Activated B cell treated with CpG ODN at 0.5 μM for 24 hours (primary cell): ENCODE measurements at regions of chr9 and their contacts with region 1.

Region 1: DNA sequence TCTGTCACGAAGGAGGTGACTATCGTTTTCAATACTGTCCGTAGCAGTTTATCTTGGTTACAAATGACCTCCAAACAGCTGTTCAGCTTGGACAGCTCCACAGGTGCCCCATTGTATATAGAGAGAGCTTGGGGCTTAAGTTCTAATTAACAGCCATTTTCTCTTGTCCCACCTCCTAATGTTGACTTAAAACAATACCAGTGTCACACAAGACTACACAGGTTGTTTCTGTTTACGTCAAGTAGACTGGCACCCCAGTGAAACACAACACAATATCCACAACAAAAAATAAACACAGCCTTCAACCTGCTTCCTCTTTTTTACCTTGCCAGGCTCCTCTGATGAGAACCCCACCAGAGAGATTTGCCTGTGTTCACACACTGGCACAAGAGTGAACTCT is 39.8 kb upstream of the TLE1 start:
- DNase-seq: no peak
- ATAC-seq: peak; percentile 72
- H3K4me3 Mint-ChIP-seq: peak overlapping the region; percentile 76
- H3K27ac Mint-ChIP-seq: peak overlapping the region; percentile 76
- H3K4me1 Mint-ChIP-seq: peaks cover 23% of the 10 kb centered on the region
- H3K27me3 Mint-ChIP-seq: no peaks in the 10 kb centered on the region
- CTCF ChIP-seq: no peak

Region 2: DNA sequence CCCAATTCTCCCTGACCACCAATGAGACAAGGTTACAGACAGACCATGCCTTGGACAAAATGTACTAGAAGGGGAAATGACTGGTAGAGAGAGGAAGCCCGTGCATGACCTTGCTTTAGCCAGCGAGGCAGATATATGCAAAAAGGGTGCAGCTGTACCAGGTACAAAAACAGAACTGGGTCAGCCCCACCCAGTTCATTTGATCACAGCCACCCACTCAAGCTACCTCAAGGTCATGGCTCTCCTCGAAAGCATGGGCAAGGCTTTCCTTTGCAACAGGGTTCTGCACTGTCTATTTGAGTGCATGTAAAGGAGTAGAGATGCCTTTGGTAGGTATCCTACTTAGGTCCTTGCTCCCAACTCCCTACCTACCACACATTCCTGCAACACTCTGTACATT is 73.1 kb before region 1 on chr9:
- CTCF ChIA-PET with region 1: no interaction called
- POLR2A ChIA-PET with region 1: interaction called, 11 read pairs
- intact Hi-C with region 1: loop called (anchors 1 kb)
- DNase-seq: peak; percentile 42
- ATAC-seq: peak; percentile 89
- H3K4me3 Mint-ChIP-seq: peak overlapping the region; percentile 78
- H3K27ac Mint-ChIP-seq: peak overlapping the region; percentile 97
- H3K4me1 Mint-ChIP-seq: peaks cover 84% of the 10 kb centered on the region
- H3K27me3 Mint-ChIP-seq: no peaks in the 10 kb centered on the region
- CTCF ChIP-seq: no peak

Region 3: DNA sequence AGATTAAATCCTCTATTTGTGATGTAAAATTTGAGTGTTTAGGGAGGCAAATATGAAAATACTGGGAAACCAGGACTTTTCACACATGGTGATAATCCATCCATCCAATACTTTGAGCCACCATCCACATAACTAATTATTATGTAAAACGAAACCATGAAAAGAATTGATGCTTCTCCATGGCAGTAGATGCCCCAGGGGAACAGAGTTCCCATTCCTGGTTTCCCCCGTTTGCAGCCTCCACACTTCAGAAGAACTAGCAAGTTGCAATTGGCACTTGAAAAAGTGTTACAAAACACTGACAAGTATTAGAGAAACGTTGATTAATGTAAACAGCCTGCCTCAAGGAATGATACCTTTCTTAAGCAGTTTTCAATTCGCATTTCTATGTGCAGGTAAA is 30.0 kb before region 1 on chr9:
- CTCF ChIA-PET with region 1: no interaction called
- POLR2A ChIA-PET with region 1: no interaction called
- intact Hi-C with region 1: no loop called
- DNase-seq: no peak
- ATAC-seq: no peak
- H3K4me3 Mint-ChIP-seq: no peak overlapping the region
- H3K27ac Mint-ChIP-seq: no peak overlapping the region
- H3K4me1 Mint-ChIP-seq: peaks cover 9% of the 10 kb centered on the region
- H3K27me3 Mint-ChIP-seq: no peaks in the 10 kb centered on the region
- CTCF ChIP-seq: no peak

Region 4: GRCh38 chr9:81826517-81826906 is 97.4 kb after region 1 on chr9:
- CTCF ChIA-PET with region 1: no interaction called
- POLR2A ChIA-PET with region 1: no interaction called
- intact Hi-C with region 1: loop called (anchors 10 kb)
- DNase-seq: no peak
- ATAC-seq: no peak
- H3K4me3 Mint-ChIP-seq: no peak overlapping the region
- H3K27ac Mint-ChIP-seq: no peak overlapping the region
- H3K4me1 Mint-ChIP-seq: peaks cover 23% of the 10 kb centered on the region
- H3K27me3 Mint-ChIP-seq: no peaks in the 10 kb centered on the region
- CTCF ChIP-seq: no peak

Region 5: DNA sequence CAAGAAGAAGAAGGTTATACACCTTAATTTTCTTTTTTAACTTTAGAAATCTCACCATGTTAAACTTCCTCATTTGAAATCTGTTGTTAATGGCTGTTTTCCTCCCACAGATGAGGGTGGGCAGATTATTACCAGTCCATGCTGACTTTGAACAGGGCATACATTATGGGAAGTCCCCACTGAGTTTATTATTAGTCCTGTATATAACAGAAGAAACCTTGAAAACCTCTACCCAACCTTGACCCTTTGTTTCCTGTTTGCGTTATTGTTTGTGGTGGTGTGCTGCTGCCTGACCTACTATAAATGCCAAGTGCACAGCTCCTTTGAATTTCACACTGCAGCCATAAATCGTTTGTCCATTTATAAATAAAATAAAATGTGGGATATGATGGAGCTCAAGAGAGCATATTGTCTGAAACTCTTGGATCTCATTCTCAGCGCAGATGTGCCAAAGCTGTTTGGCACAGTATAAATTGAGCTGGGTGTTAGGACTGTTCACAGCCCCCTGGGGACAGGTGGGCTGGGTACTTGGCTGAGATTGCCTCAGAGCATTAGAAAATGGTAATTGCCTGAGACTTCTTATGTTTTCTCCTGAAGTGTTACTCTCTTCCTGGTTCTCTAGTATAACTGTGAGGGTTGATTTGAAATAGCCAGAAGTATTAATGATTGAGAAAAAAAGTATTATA is 399.0 kb after region 1 on chr9:
- CTCF ChIA-PET with region 1: no interaction called
- POLR2A ChIA-PET with region 1: no interaction called
- intact Hi-C with region 1: loop called (anchors 2 kb)
- DNase-seq: no peak
- ATAC-seq: peak; percentile 90
- H3K4me3 Mint-ChIP-seq: peak overlapping the region; percentile 60
- H3K27ac Mint-ChIP-seq: peak overlapping the region; percentile 84
- H3K4me1 Mint-ChIP-seq: peaks cover 72% of the 10 kb centered on the region
- H3K27me3 Mint-ChIP-seq: no peaks in the 10 kb centered on the region
- CTCF ChIP-seq: no peak

Region 6: GRCh38 chr9:82295181-82295580 is 566.0 kb after region 1 on chr9:
- CTCF ChIA-PET with region 1: no interaction called
- POLR2A ChIA-PET with region 1: no interaction called
- intact Hi-C with region 1: loop called (anchors 5 kb)
- DNase-seq: no peak
- ATAC-seq: no peak
- H3K4me3 Mint-ChIP-seq: no peak overlapping the region
- H3K27ac Mint-ChIP-seq: no peak overlapping the region
- H3K4me1 Mint-ChIP-seq: peaks cover 2% of the 10 kb centered on the region
- H3K27me3 Mint-ChIP-seq: no peaks in the 10 kb centered on the region
- CTCF ChIP-seq: no peak